Sigmoid colon (tissue), 7 donors: ENCODE measurements at regions of chr22 and their contacts with region 1.

Region 1: DNA sequence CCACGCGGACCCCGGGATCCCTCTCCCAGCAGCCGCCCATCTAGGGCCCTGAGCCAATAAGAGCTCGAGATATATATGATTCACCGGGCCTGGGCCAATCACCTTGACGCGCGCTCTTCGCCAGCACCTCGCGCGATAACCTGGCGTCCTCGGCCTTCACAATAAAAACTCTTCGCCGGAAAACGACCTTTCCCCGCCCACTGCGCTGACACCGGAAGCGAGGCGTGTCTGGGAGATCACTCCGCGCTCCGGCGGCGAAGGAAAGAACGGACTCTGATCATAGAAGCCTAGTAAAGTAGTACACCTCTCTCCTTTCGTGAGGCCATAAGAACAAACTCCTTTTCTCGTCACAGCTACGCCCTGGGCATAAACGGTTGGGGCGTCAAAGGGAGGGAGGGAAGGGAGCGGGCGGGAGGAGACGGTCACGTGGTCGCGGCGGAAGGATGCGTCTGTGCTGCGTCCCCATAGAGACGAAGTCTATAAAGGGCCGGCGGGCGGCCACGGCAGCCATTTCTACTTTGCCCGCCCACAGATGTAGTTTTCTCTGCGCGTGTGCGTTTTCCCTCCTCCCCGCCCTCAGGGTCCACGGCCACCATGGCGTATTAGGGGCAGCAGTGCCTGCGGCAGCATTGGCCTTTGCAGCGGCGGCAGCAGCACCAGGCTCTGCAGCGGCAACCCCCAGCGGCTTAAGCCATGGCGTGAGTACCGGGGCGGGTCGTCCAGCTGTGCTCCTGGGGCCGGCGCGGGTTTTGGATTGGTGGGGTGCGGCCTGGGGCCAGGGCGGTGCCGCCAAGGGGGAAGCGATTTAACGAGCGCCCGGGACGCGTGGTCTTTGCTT is at the start of gene ATF4:
- DNase-seq: peak; percentile 99
- H3K4me3 ChIP-seq: peak within 1 kb of the TSS; percentile 80 to 100 (median 96)
- H3K27ac ChIP-seq: peak within 1 kb of the TSS; percentile 99 to 100 (median 99)
- H3K4me1 ChIP-seq: peaks cover 0 to 56% (median 50%) of the 10 kb centered on the region in 4 donors
- H3K27me3 ChIP-seq: no peaks in the 10 kb centered on the region
- CTCF ChIP-seq: no peak
- EP300 ChIP-seq: peak in 1 of 4 donors; percentile 32
- POLR2A ChIP-seq: peak; percentile 100
- total RNA-seq, gene ATF4: 483 to 651 (median 631) TPM

Region 2: DNA sequence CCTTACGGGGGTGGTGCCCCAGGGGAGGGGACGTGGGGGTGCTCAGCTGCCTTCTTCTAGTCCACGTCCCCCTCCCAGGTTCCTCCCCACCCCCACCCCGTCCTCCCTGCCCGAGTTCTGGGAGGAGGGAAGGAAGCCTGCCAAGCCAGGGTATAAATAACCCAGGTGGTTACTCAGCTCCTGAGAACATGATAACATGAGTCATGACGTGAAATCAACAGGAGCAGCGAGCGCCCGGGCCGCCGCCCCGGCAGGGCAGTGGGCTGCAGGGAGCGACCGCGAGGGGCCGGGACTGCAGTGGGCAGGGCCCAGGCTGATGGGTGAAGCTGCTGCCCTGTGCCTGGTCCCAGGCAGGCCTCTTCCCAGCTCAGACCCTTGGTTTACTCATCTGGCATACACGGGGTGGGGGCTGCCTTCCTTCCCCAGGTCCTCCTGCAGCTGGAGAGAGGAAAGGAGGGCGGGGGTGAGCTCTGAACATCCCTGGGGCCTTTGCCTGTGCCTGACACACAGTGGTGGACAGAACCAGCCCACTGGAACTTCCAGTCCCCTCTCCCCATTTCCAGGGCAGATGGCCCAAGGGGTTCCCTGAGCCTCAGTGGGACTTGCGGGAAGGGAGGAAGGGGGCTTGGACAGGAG is 266.7 kb before region 1 on chr22:
- intact Hi-C with region 1: no loop called
- DNase-seq: no peak
- H3K4me3 ChIP-seq: peak overlapping the region in 2 of 4 donors; percentile 8 to 15
- H3K27ac ChIP-seq: peak overlapping the region; percentile 16 to 72 (median 42)
- H3K4me1 ChIP-seq: peaks cover 0 to 37% (median 29%) of the 10 kb centered on the region in 4 donors
- H3K27me3 ChIP-seq: peaks cover 0 to 7% (median 3%) of the 10 kb centered on the region in 3 donors
- CTCF ChIP-seq: no peak
- EP300 ChIP-seq: no peak
- POLR2A ChIP-seq: no peak

Region 3: GRCh38 chr22:39349967-39350726 is 170.1 kb before region 1 on chr22 and contains the start of gene SYNGR1:
- intact Hi-C with region 1: loop called (anchors 5 kb)
- DNase-seq: no peak
- H3K4me3 ChIP-seq: peak within 1 kb of the TSS; percentile 63 to 98 (median 78)
- H3K27ac ChIP-seq: peak within 1 kb of the TSS; percentile 72 to 82 (median 77)
- H3K4me1 ChIP-seq: peaks cover 0 to 22% (median 19%) of the 10 kb centered on the region in 4 donors
- H3K27me3 ChIP-seq: no peaks in the 10 kb centered on the region
- CTCF ChIP-seq: no peak
- EP300 ChIP-seq: no peak
- POLR2A ChIP-seq: no peak
- total RNA-seq, gene SYNGR1: 14.5 to 29.4 (median 20.2) TPM

Region 4: GRCh38 chr22:39395936-39396796 is 124.1 kb before region 1 on chr22:
- intact Hi-C with region 1: loop called (anchors 5 kb)
- DNase-seq: no peak
- H3K4me3 ChIP-seq: no peak overlapping the region
- H3K27ac ChIP-seq: no peak overlapping the region
- H3K4me1 ChIP-seq: peaks cover 0 to 11% (median 10%) of the 10 kb centered on the region in 4 donors
- H3K27me3 ChIP-seq: no peaks in the 10 kb centered on the region
- CTCF ChIP-seq: no peak
- EP300 ChIP-seq: no peak
- POLR2A ChIP-seq: no peak

Region 5: GRCh38 chr22:39490135-39490798 is 30.0 kb before region 1 on chr22:
- intact Hi-C with region 1: no loop called
- DNase-seq: peak; percentile 85
- H3K4me3 ChIP-seq: no peak overlapping the region
- H3K27ac ChIP-seq: no peak overlapping the region
- H3K4me1 ChIP-seq: no peaks in the 10 kb centered on the region
- H3K27me3 ChIP-seq: no peaks in the 10 kb centered on the region
- CTCF ChIP-seq: no peak
- EP300 ChIP-seq: no peak
- POLR2A ChIP-seq: no peak

Region 6: GRCh38 chr22:39502109-39502788 is 18.0 kb before region 1 on chr22 and contains the start of gene MIEF1:
- intact Hi-C with region 1: loop called (anchors 2 kb)
- DNase-seq: peak; percentile 99
- H3K4me3 ChIP-seq: peak within 1 kb of the TSS; percentile 95 to 100 (median 100)
- H3K27ac ChIP-seq: peak within 1 kb of the TSS; percentile 74 to 95 (median 84)
- H3K4me1 ChIP-seq: peaks cover 0 to 42% (median 29%) of the 10 kb centered on the region in 4 donors
- H3K27me3 ChIP-seq: no peaks in the 10 kb centered on the region
- CTCF ChIP-seq: no peak
- EP300 ChIP-seq: peak in 1 of 4 donors; percentile 39
- POLR2A ChIP-seq: peak; percentile 29 to 45
- total RNA-seq, gene MIEF1: 11.8 to 19.7 (median 14.2) TPM